ENCODE measurements at regions of chr22 and their contacts with region 1.

Region 1: GRCh38 chr22:32804531-32805360 is 3.2 kb downstream of the TIMP3 start:
- DNase-seq: peak; percentile 44
- ATAC-seq: no peak

Region 2: GRCh38 chr22:32839831-32840584 is 35.3 kb after region 1 on chr22:
- intact Hi-C with region 1: loop called (anchors 5 kb)
- DNase-seq: no peak
- ATAC-seq: peak; percentile 16